ENCODE measurements at regions of chr12 and their contacts with region 1.

Region 1: DNA sequence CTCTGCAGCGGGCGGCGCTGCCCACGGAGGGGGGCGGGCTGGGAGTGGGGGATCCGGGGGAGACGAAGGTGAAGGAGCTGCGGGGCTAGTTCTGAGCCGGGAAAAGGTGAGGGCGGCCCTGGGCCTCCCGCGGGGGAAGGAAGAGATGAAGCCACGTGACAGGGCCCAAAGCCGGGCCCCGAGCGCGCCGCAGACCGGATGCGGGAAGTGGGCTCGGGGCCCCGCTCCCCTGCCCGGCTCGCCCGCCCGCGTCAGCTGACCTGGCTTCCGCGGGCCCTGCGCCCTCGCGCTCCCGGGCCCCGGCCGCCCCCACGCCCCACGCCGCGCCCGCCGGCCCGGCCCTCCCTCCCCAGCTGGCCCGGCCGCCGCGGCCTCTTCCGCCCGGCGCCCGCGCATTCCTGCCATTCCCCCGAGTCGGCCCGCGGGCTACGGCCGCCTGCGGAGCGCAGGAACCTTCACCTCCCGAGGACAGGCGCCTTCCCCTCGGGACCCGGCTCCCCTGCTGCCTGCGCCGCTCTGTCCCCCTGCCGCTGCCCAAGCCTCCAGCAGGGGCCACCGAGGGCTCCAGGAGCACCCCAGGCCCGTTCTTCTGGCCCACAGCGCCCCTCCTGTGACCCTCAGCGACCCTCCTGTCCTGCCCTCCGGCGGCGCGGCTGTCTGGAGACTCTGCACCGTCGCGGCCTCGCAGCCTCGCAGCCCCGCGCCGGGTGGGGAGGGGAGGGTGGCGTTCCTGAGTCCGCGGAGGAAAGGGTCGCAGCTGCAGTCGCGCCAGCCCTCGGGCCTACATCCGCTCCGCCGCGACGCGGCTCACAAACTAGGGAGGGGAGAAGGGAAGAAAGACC is 20.4 kb downstream of the NINJ2 start:
- DNase-seq: peak; percentile 63 to 74
- H3K4me3 ChIP-seq: peak overlapping the region; percentile 53 to 57
- H3K27ac ChIP-seq: peak overlapping the region; percentile 92 to 97
- H3K4me1 ChIP-seq: peaks cover 8 to 15% of the 10 kb centered on the region in 2 donors
- H3K27me3 ChIP-seq: no peaks in the 10 kb centered on the region
- CTCF ChIP-seq: peak in 3 of 4 experiments; percentile 21 to 35 (median 33)
- POLR2A ChIP-seq: no peak

Region 2: DNA sequence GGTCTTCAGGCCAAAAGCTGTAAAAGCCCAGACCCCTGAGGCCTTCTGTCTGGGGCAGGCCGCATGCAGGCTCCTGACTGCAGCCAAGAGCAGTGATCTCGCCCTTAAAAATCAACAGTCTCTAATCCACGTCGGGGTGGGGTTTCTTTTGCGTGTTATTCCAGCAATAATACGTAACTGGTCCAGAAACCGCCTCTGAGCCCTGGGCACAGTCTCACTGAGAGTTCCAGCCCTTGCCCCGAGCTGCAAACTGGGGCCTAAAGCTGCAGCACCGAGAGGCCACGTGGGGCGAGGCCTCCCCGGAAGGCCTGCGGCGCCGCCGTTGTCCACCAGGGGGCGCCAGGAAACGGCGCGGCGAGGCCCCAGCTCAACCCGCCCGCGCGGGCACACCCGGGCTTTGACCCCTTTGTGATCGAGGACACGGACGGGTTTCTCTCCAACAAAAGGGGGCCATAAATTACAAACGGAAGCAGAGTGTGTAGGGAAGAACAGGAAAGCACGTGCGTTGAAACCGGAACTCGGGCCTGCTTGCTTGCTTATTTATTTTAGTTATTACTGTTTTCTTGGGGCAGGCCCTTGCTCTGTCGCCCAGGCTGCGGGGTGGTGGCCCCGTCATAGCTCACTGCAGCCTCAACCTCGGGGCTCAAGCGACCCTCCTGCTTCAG is 66.8 kb before region 1 on chr12:
- intact Hi-C with region 1: loop called (anchors 2 kb)
- DNase-seq: peak; percentile 67 to 83
- H3K4me3 ChIP-seq: no peak overlapping the region
- H3K27ac ChIP-seq: peak overlapping the region; percentile 43 to 66
- H3K4me1 ChIP-seq: no peaks in the 10 kb centered on the region
- H3K27me3 ChIP-seq: no peaks in the 10 kb centered on the region
- CTCF ChIP-seq: peak; percentile 97 to 100 (median 98)
- POLR2A ChIP-seq: no peak

Region 3: DNA sequence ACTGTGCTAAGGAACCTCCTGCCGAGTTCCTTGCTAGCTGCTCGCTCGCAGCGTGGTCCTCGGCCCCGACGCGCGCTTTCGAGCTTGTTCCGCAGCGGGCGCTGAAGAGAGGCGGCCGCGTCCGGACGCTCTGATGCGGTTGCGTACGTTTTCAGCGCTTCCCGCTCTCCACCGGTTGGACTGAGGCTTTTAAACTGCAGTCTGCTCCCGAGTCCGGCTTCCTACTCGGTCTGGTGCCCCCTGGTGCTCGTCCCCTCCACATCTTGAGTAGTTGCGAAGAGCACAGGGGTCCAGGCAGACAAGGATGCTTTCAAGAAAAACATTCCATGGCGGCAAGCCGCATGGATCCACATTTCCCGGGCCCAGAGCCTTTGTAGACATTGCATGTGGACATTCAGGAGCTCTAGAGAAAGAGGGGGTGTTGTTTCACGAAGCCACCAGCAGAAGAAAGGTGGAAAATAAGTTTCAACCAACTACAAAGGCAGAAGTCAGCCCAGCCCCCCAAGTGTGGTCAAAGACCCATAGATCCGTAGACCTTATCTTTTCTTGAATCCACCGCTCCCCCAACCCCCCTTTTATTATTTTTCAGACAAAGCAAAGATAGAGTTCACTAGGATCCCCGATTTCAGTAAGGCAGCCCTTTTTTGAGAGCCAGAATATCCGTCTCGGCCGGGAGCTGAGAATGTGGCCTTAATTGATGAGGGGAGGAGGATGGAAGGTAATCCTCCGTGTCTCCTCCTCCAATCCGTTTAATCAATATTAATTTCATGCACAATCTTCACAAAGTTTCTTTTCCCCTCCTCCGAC is 108.5 kb after region 1 on chr12:
- intact Hi-C with region 1: loop called (anchors 10 kb)
- DNase-seq: peak; percentile 93 to 94
- H3K4me3 ChIP-seq: peak overlapping the region; percentile 72 to 78
- H3K27ac ChIP-seq: peak overlapping the region; percentile 99
- H3K4me1 ChIP-seq: no peaks in the 10 kb centered on the region
- H3K27me3 ChIP-seq: no peaks in the 10 kb centered on the region
- CTCF ChIP-seq: peak; percentile 77 to 86 (median 79)
- POLR2A ChIP-seq: peak; percentile 40 to 64

Measured in uterus (tissue), 4 donors.